ENCODE measurements at regions of chr13 and their contacts with region 1.

Region 1: DNA sequence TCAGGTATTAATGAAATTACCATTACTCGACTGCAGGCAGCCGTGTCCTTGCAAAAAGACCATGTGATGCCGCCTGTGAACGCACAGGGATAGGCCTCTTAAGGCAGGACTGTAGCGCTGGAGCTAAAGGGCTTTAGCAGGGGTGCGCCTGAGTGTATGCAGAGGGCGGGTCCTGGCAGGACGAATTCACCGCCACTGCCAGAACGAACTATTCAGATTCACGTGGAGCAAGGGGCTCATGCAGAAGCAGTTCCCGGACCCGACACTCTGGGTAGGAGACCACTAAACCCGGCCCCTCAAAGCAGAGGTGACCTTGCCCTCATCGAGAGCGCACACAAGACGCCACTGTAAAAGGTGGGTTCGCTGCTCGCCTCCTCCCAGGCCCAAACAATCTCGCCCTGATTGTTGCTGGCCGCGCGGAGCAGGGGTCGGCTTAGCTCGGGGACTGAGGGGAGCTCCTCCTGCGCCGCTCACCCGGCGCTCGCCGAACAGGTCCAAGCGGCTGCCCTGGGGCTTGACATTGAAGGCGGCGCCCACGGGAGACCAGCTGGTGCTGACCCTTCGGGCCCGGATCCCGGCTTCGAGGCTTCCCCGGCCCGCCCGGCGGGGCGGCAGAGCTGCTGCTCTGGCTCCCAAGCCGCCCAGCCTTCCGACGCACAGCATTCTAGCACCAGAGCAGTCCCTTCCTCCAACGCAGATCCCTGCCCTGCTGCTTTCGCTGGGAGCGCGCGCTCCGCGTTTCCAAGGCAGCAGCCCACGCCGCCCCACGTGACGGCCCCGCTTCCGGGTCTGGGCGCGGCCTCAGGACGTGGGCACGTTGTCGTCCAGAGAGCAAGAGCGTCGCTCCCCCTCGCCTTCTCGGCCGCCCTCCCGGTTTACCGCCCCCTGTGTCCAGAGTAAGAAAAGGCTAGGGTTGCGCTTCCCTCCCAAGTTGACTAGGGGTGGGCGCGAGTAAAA is at the start of gene MIPEP:
- DNase-seq: peak; percentile 98
- total RNA-seq, gene MIPEP: 15.0 to 15.7 TPM

Region 2: GRCh38 chr13:22210134-22210930 is 1678.6 kb before region 1 on chr13:
- intact Hi-C with region 1: no loop called
- DNase-seq: no peak

Region 3: DNA sequence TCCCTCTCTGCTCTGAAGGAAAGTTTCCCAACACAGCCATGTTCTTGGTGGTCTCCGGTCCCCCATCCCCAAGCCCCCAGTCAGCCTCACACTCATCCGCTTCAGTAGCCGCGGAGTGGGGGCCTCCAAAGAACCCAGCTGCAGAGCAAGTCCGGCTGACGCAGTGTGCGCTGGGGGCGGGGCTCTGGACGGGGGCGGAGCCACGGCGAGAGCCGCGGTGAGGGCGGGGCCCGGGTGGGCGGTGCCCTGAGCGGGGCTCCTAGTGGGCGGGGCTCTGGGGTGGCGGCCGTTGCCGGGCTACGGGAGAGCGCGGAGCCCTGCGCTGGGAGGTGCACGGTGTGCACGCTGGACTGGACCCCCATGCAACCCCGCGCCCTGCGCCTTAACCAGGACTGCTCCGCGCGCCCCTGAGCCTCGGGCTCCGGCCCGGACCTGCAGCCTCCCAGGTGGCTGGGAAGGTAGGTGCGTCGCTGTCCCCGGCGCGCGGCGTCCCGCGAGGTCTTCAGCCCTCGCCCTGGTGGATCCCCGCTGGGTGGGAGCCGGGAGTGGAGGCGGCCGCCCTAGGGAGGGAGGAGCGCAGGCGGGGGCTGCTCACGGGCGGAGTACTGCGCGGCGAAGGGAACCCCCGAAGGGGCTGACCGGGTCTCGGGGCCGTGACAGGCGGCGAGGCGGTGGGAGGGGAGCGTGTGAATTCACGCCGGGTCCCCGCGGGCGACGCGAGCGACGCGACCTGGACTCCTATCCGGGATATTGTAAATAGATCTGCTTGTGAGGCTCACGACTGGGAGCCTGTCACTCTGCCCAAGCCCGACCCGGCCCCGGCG is 309.7 kb before region 1 on chr13:
- intact Hi-C with region 1: loop called in 1 of 2 experiments (anchors 10 kb)
- DNase-seq: peak; percentile 98

Region 4: DNA sequence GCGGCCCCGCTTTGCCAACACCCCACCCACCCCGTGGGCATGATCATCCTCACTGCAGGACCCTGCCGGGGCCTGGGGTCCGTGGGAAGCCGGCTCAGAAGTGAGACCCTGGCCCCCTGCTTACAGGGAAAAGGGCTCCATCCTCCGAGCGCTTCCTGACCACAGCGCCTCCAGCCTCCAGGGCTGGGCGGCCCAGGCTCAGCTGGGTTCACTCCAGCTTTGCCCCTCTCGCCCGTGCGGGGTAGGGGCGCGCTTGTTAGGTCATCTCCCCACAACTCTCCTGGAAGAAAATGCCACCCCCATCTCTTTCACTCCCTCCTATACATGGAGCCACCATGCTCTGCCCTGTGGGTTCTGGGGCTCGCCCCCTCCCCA is 15.0 kb after region 1 on chr13:
- intact Hi-C with region 1: no loop called
- DNase-seq: no peak

Region 5: GRCh38 chr13:24323036-24323738 is 434.3 kb after region 1 on chr13:
- intact Hi-C with region 1: loop called in 1 of 2 experiments (anchors 5 kb)
- DNase-seq: no peak